IMR-90 (cell line): ENCODE measurements at regions of chr12 and their contacts with region 1.

Region 1: DNA sequence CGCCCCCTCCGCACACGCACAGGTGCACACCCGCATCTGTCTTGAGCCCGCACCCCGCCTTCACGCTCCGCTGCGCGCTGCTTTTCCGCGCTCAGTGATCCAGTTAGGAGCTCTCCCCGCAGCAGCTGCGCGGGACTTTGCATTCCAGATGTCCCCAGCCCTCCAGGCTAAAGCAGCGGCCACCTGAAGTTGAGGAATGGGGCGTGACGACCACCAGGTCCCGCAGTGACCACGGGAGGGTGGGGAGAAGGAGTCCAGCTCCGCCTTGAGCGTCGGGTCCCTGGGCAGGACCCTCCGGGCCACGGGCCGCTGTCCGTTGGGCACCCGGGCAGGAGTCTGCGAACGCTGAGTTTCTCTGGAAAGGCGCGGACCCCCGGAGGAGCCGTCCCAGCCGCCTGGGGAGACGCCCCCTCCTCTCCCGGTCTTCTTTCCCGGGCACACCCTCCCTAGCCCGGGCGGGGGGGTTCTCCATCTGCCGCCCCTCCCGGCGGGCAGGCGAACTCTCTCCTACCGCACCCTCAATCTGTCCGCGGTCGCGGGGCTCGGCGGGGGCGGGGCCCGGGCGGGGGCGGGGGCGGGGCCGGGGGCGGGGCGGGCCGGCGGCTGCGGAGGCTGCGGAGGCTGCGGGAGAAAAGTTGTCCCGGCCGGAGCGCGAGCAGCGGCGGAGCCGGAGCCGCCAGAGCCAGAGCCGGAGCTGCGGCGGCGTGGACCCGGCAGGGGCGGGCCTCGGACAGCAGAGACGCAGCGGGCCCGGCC is at the start of gene TMEM132C:
- DNase-seq: no peak
- ATAC-seq: no peak
- H3K4me3 ChIP-seq: no peak within 1 kb of the TSS
- H3K27ac ChIP-seq: no peak within 1 kb of the TSS
- H3K4me1 ChIP-seq: no peaks in the 10 kb centered on the region
- H3K27me3 ChIP-seq: no peaks in the 10 kb centered on the region
- CTCF ChIP-seq: no peak
- POLR2A ChIP-seq: no peak
- RAD21 ChIP-seq: no peak
- total RNA-seq, gene TMEM132C: not detected in 2 replicates

Region 2: GRCh38 chr12:127903146-127903545 is 363.6 kb before region 1 on chr12:
- CTCF ChIA-PET with region 1: no interaction called
- POLR2A ChIA-PET with region 1: no interaction called
- dilution Hi-C with region 1: no loop called
- in situ Hi-C with region 1: no loop called
- intact Hi-C with region 1: loop called (anchors 5 kb)
- DNase-seq: no peak
- ATAC-seq: no peak
- H3K4me3 ChIP-seq: no peak overlapping the region
- H3K27ac ChIP-seq: no peak overlapping the region
- H3K4me1 ChIP-seq: no peaks in the 10 kb centered on the region
- H3K27me3 ChIP-seq: no peaks in the 10 kb centered on the region
- CTCF ChIP-seq: no peak
- POLR2A ChIP-seq: no peak
- RAD21 ChIP-seq: no peak